ENCODE measurements at regions of chr11 and their contacts with region 1.

Region 1: DNA sequence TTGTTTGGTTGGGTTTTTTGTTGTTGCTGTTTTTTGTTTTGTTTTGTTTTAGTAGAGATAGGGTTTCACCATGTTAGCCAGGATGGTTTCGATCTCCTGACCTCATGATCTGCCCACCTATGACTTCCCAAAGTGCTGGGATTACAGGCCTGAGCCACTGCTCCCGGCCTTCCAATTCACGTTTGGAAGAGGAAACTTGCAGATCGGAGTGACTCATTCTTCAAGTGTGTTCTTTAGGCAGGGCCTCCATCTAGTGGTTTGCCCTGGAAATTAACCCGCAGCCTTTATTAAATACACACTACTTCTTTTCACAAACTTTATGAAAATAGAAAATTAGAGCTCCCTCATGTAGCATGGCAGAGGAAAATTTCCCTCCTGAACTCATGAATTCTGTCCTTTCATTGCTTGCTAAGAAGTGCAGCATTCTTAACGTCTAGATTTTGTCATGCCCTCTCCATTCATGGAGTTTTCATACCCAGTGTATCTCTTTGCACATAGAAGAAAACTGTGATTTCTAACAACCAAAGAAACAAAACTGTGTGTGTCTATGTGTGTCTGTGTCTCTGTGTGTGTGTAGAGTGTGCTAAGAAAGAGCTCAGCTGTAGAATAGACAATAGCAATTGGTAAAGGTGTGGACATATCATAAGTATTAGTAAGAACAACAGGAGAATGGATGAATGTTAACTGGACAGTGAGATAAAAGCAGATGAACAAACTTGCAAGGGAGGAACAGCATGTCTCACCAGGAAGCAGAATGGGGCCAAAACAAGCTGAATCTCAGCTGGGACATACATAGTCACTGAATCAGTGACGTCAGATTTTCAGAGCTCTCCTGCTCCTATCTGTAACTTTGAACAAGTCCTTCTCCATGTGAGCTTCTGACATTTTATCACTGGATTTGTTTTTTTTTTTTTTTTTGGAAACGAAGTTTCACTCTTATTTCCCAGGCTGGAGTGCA is 118.4 kb downstream of the BBOX1 start:
- DNase-seq: peak; percentile 48
- H3K4me3 ChIP-seq: no peak overlapping the region
- H3K27ac ChIP-seq: no peak overlapping the region
- H3K27me3 ChIP-seq: no peaks in the 10 kb centered on the region
- CTCF ChIP-seq: peak; percentile 89

Region 2: GRCh38 chr11:26297189-26297975 is 861.6 kb before region 1 on chr11:
- CTCF ChIA-PET with region 1: interaction called, 29 read pairs
- POLR2A ChIA-PET with region 1: no interaction called
- DNase-seq: peak; percentile 39
- H3K4me3 ChIP-seq: no peak overlapping the region
- H3K27ac ChIP-seq: no peak overlapping the region
- H3K27me3 ChIP-seq: no peaks in the 10 kb centered on the region
- CTCF ChIP-seq: peak; percentile 72

Region 3: DNA sequence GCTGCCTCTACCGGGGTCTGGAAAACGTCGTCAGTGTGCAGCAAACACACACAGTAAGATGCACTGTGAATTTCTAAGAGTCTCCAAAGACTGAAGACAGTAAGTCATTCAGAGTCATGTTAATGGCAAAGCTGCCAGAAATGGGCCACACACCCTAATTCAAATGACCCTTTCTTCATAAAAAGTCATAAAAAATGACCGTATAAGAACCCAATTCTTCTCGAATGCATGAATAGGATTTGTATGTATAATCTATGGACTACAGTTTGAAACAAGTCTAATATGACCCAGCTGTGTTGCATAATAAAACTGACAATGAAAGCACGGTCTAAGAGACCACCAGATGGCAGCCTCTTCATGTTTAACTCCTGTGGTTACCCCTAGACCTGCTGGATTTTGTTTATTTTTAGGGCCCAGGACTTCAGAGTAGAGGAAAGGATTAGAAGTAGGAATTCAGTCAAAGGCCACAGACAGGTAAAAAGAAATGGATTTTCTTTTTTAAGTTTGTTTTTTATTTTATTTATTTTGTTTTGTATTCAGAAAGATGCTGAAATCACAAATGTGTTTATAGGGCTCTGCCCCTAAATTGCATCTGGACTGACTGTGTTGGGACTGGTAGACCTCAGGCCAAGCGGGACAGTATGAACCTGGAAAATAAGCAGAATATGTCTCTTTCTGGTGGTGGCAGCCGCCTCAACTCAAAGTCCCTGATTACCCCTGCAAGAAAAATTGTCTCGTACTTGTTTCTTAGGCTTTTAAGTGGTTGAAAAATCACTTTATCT is 405.1 kb before region 1 on chr11:
- CTCF ChIA-PET with region 1: interaction called, 82 read pairs
- POLR2A ChIA-PET with region 1: no interaction called
- DNase-seq: peak; percentile 45
- H3K4me3 ChIP-seq: no peak overlapping the region
- H3K27ac ChIP-seq: no peak overlapping the region
- H3K27me3 ChIP-seq: no peaks in the 10 kb centered on the region
- CTCF ChIP-seq: peak; percentile 85

Region 4: DNA sequence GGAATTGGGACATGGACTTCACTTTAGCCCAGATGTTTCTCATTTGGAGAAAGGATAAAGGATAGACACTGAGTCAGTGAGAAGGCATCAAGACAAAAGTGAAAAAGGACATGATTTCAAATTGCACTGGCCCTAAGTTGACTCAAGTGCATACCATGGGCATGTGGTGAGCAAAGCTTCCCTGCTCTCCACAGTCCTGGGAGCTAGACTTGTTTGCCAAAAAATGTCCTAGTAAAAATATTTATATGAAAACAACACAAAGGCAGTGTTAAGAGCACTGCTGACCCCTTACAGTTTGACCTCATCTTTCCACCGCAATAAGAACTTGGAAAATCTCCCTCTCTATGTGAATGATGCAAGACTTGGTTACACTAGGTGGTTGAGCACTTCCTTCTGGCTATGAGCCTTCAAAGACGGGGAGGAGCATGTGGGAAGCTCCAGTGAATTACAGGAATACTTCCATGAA is 211.6 kb before region 1 on chr11:
- CTCF ChIA-PET with region 1: interaction called, 17 read pairs
- POLR2A ChIA-PET with region 1: no interaction called
- DNase-seq: peak; percentile 99
- H3K4me3 ChIP-seq: no peak overlapping the region
- H3K27ac ChIP-seq: no peak overlapping the region
- H3K27me3 ChIP-seq: no peaks in the 10 kb centered on the region
- CTCF ChIP-seq: no peak

Region 5: GRCh38 chr11:27076121-27076589 is 82.8 kb before region 1 on chr11:
- CTCF ChIA-PET with region 1: no interaction called
- POLR2A ChIA-PET with region 1: interaction called, 10 read pairs
- DNase-seq: no peak
- H3K4me3 ChIP-seq: no peak overlapping the region
- H3K27ac ChIP-seq: no peak overlapping the region
- H3K27me3 ChIP-seq: no peaks in the 10 kb centered on the region
- CTCF ChIP-seq: no peak

Region 6: DNA sequence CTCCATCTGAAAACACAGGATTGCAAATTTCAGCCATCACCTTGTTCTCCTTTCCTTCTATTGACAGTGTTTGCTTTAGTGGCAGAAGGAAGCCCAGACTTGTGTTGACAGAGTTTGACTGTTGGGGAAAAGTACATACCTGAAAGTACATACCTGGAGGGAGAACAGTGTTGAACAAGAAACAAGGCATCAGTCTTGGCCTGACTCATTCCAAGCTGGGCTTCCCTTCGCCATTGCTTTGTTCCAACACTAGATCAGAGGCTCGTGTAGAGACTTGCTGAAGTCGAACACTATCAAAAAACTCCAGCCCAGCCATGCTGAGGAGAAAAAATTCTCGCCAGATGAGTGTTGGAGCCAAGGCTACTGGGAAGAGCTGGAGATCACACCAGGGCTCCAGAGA is 15.0 kb after region 1 on chr11:
- CTCF ChIA-PET with region 1: interaction called, 13 read pairs
- POLR2A ChIA-PET with region 1: no interaction called
- DNase-seq: no peak
- H3K4me3 ChIP-seq: no peak overlapping the region
- H3K27ac ChIP-seq: no peak overlapping the region
- H3K27me3 ChIP-seq: peaks cover 16% of the 10 kb centered on the region
- CTCF ChIP-seq: no peak

Region 7: GRCh38 chr11:27228232-27228905 is 69.4 kb after region 1 on chr11:
- CTCF ChIA-PET with region 1: no interaction called
- POLR2A ChIA-PET with region 1: no interaction called
- DNase-seq: no peak
- H3K4me3 ChIP-seq: no peak overlapping the region
- H3K27ac ChIP-seq: no peak overlapping the region
- H3K27me3 ChIP-seq: no peaks in the 10 kb centered on the region
- CTCF ChIP-seq: no peak

Region 8: DNA sequence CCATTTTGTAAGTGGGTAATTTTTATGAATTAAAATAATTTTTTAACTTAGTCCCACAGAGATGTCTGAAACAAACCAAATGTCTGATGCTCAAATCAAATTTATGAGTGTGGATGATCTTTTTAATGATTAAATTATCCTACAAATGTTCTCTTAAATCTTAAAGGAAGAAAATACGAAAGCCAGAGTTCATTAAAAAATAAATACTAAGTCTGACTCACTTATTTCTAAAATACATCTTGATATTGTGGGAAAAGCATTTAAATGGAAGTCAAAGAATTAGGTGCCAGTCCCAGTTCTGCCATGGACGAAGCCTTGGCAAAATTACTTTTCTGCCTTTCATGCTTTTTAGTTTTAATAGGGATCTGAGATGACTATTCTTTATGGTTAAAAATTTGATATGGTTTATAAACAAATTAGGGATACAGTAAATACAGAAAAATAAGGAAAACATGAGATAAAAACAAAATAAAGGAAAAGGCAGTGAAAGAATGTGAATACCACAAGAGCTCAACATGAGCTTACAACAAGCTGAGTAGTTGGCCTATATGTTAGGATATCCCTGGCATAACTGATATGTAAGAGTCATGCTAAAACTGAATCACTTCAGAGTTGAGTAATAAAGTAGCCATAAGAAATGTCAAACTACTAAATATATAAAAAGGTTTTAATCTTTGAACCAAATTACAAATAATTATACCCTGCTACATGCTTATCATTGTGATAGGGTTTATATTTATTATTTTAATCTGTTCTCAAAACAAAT is 194.8 kb after region 1 on chr11:
- CTCF ChIA-PET with region 1: no interaction called
- POLR2A ChIA-PET with region 1: no interaction called
- DNase-seq: peak; percentile 18
- H3K4me3 ChIP-seq: no peak overlapping the region
- H3K27ac ChIP-seq: no peak overlapping the region
- H3K27me3 ChIP-seq: no peaks in the 10 kb centered on the region
- CTCF ChIP-seq: no peak

Measured in AG04450 (cell line).